ENCODE measurements at regions of chr12 and their contacts with region 1.

Region 1: GRCh38 chr12:119659289-119659897 is 8.5 kb upstream of the PRKAB1 start:
- DNase-seq: peak in 13 of 14 experiments; percentile 9 to 72 (median 22)
- ATAC-seq: peak; percentile 68
- H3K4me3 ChIP-seq: no peak overlapping the region
- H3K4me3 Mint-ChIP-seq: no peak overlapping the region
- H3K27ac ChIP-seq: no peak overlapping the region
- H3K27ac Mint-ChIP-seq: no peak overlapping the region
- H3K4me1 ChIP-seq: no peaks in the 10 kb centered on the region
- H3K4me1 Mint-ChIP-seq: peaks cover 5% of the 10 kb centered on the region
- H3K27me3 ChIP-seq: no peaks in the 10 kb centered on the region
- H3K27me3 Mint-ChIP-seq: no peaks in the 10 kb centered on the region
- CTCF ChIP-seq: peak; percentile 95

Region 2: DNA sequence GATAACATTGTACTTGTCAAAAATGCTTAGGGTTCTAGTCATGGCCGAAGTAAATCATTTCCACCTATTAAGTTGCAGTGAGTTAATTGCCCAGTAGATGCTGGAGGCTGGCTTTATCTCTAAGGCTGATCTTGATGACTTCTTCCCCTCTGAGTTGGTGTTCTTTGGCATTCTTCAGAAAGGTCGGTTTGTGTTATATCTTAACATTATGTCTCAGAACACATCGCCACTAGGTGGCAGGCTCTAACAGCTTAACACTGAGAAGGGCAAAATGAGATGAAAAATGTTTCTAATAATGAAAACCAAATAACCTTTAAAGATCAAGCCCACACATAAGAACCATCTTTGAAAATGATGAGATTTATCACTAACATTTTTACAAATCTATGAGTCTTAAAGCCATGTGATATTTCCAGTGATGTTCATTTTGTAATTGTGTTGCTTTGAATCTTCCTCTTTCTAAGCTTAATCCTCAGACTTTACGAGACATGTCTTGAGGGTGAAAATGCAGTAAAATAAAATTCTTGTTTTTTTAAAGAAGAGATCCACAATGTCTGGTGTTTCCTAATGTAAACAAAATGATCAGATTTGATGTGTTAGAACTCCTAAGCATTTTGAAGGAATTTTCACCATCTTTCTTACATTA is 1254.4 kb before region 1 on chr12:
- CTCF ChIA-PET with region 1: no interaction called
- POLR2A ChIA-PET with region 1: no interaction called
- intact Hi-C with region 1: loop called in 1 of 2 experiments (anchors 2 kb)
- DNase-seq: peak; percentile 14 to 64 (median 36)
- ATAC-seq: peak; percentile 61
- H3K4me3 ChIP-seq: no peak overlapping the region
- H3K4me3 Mint-ChIP-seq: no peak overlapping the region
- H3K27ac ChIP-seq: no peak overlapping the region
- H3K27ac Mint-ChIP-seq: no peak overlapping the region
- H3K4me1 ChIP-seq: no peaks in the 10 kb centered on the region
- H3K4me1 Mint-ChIP-seq: no peaks in the 10 kb centered on the region
- H3K27me3 ChIP-seq: no peaks in the 10 kb centered on the region
- H3K27me3 Mint-ChIP-seq: no peaks in the 10 kb centered on the region
- CTCF ChIP-seq: peak; percentile 84

Region 3: GRCh38 chr12:119115296-119115905 is 544.0 kb before region 1 on chr12:
- CTCF ChIA-PET with region 1: no interaction called
- POLR2A ChIA-PET with region 1: no interaction called
- intact Hi-C with region 1: loop called in 1 of 2 experiments (anchors 5 kb)
- DNase-seq: peak in 4 of 14 experiments; percentile 11 to 37 (median 28)
- ATAC-seq: no peak
- H3K4me3 ChIP-seq: no peak overlapping the region
- H3K4me3 Mint-ChIP-seq: no peak overlapping the region
- H3K27ac ChIP-seq: no peak overlapping the region
- H3K27ac Mint-ChIP-seq: no peak overlapping the region
- H3K4me1 ChIP-seq: no peaks in the 10 kb centered on the region
- H3K4me1 Mint-ChIP-seq: no peaks in the 10 kb centered on the region
- H3K27me3 ChIP-seq: no peaks in the 10 kb centered on the region
- H3K27me3 Mint-ChIP-seq: peaks cover 12% of the 10 kb centered on the region
- CTCF ChIP-seq: peak; percentile 79